K562 (cell line): ENCODE measurements at regions of chr9 and their contacts with region 1.

Region 1: GRCh38 chr9:97237951-97238851 is 69.3 kb upstream of the CCDC180 start:
- DNase-seq: peak; percentile 84 to 94 (median 86)
- ATAC-seq: peak; percentile 97
- H3K4me3 ChIP-seq: peak overlapping the region; percentile 76
- H3K27ac ChIP-seq: peak overlapping the region; percentile 100
- H3K4me1 ChIP-seq: peaks cover 14 to 23% of the 10 kb centered on the region in 2 experiments
- H3K27me3 ChIP-seq: no peaks in the 10 kb centered on the region
- CTCF ChIP-seq: no peak; a peak in 1 of 6 replicates
- EP300 ChIP-seq: 0 out of 2 replicates have a peak, but pooled peaks have one; percentile 21
- POLR2A ChIP-seq: peak; percentile 92
- RAD21 ChIP-seq: no peak

Region 2: DNA sequence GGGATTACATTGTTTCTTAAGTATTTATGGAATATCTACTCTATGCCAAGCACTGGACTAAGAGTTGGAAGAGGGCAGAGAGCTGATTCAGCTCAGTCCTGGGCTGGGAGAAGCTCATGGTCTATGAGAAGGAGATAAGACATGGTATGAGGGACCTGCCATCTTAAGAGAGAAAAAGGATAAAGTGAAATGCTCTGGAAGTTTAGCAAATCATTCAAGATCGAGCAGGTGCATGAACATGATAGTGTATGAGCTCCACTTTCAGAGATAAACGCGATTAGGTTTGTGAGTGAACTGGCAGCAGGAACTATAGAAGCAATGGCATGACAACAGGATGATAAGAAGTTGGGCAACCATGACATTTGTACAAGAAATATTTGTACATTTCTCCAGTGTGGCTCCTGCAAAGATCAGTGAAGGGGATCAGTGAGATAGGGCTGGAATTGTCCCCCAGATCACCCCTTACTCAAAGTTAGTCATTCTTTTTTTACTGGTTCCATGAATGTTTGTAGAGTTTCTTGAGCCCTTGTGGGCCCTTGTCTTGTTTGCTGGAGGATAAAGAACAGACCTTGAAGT is 42.6 kb after region 1 on chr9:
- CTCF ChIA-PET with region 1: no interaction called
- POLR2A ChIA-PET with region 1: interaction called, 4 read pairs
- in situ Hi-C with region 1: no loop called
- intact Hi-C with region 1: loop called (anchors 2 kb)
- DNase-seq: peak; percentile 41 to 68 (median 46)
- ATAC-seq: peak; percentile 73
- H3K4me3 ChIP-seq: no peak overlapping the region
- H3K27ac ChIP-seq: peak overlapping the region; percentile 12; the same call in 1 of the 3 replicates
- H3K4me1 ChIP-seq: peaks cover 4 to 23% of the 10 kb centered on the region in 2 experiments; a peak in 3 of 5 replicates
- H3K27me3 ChIP-seq: no peaks in the 10 kb centered on the region
- CTCF ChIP-seq: no peak
- EP300 ChIP-seq: peak; percentile 69
- POLR2A ChIP-seq: no peak
- RAD21 ChIP-seq: no peak

Region 3: DNA sequence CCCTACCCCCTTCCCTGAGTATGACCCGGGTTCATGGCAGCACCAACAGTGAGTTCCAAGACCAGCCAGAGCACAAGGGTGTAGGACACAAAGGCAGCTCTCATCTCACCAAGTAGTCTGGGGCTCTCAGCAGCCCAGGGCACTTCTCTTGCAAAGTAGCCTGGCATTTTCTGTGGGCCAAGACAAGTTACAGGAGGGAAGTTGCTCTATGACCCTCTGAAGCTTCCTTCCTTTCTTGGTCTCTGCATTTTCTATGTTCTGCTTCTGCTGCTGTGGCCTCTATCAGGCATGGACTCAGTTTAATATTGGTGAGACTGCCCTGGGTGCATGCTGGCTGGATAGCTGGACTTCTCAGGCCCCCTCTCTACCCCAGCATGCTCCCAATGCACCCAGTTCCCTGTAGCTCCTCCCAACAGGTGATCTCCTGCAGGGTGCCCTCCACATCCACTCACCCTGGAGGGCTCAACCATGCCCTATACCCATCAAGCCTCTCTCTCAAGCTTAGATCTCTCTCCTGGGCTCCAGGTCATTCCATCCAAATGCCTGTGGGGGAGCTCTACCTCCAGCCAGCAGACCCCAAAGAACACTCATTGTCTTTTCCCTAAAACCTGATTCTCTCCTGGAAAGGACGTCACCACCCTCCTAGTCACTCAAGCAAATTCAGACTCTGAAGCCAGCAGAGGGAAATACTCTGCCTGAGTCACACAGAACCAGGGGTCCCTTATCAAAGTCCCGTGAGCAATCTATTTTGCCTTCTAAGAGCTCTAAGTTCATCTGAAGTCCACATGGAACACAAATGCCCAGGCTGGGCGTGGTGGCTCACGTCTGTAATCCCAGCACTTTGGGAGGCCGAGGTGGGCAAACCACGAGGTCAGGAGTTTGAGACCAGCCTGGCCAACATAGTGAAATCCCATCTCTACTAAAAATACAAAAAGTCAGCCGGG is 1003.4 kb after region 1 on chr9:
- CTCF ChIA-PET with region 1: no interaction called
- POLR2A ChIA-PET with region 1: no interaction called
- in situ Hi-C with region 1: no loop called
- intact Hi-C with region 1: no loop called
- DNase-seq: peak in 2 of 4 experiments; percentile 28 to 49
- ATAC-seq: peak; percentile 76
- H3K4me3 ChIP-seq: no peak overlapping the region
- H3K27ac ChIP-seq: peak overlapping the region; percentile 21; the same call in 2 of the 3 replicates
- H3K4me1 ChIP-seq: peaks cover 23 to 38% of the 10 kb centered on the region in 2 experiments
- H3K27me3 ChIP-seq: no peaks in the 10 kb centered on the region
- CTCF ChIP-seq: peak; percentile 41 to 64 (median 54)
- EP300 ChIP-seq: no peak
- POLR2A ChIP-seq: no peak
- RAD21 ChIP-seq: peak in 1 of 2 experiments; percentile 39; a peak in 2 of 4 replicates